Mammary epithelial cell (primary cell): ENCODE measurements at regions of chr19 and their contacts with region 1.

Region 1: GRCh38 chr19:11766597-11767591 is at the start of gene ZNF441:
- DNase-seq: peak; percentile 92
- H3K4me3 ChIP-seq: peak within 1 kb of the TSS; percentile 46 to 59 (median 50)
- H3K27ac ChIP-seq: peak within 1 kb of the TSS; percentile 9
- H3K4me1 ChIP-seq: no peaks in the 10 kb centered on the region
- H3K27me3 ChIP-seq: no peaks in the 10 kb centered on the region
- CTCF ChIP-seq: no peak
- total RNA-seq, gene ZNF441: 3.1 to 6.7 TPM

Region 2: DNA sequence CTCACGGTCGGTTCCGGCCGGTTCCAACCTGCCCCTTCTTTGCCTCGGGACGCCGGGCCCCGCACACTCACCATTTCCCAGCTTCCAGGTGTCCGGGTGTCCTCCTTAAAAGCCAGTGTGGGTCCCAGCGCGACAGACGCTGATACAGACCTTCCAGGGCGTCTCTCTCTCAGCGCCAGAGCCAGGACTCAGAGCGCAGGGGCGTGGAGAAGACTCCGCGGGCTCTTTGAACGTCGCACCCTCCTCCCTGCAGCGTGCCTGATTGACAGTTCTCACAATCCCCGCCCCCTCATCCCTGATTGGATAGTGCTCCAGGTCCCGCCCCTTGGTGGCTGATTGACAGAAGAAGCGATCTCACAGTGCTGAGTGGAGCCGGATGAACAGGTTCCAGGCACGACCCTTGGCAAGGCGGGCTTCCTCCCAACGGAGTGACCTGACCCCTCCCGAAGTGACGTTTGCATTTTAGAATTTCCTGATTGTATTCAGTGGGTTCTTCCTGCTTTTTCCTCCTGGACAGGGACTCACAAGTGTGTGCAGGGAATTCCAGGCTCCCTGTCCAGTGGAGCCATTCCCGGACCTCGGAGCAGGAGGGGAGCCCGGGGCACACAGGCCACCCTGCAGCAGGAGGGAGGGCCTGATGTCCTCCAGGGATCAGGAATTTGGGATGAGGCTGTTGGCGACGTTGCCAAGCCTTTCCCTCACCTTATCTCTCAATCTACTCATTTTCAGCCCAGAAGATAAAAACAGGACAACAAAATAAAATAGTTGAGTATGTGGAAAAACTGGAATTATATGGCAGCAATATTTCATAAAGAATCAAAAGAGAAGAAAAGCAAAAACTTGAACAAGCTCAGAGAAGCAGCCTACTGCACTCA is 27.9 kb before region 1 on chr19 and contains the start of gene ZNF823:
- CTCF ChIA-PET with region 1: no interaction called
- dilution Hi-C with region 1: no loop called
- in situ Hi-C with region 1: no loop called
- intact Hi-C with region 1: loop called (anchors 2 kb)
- DNase-seq: peak; percentile 98
- H3K4me3 ChIP-seq: peak within 1 kb of the TSS; percentile 82 to 92 (median 91)
- H3K27ac ChIP-seq: peak within 1 kb of the TSS; percentile 61
- H3K4me1 ChIP-seq: peaks cover 20% of the 10 kb centered on the region
- H3K27me3 ChIP-seq: no peaks in the 10 kb centered on the region
- CTCF ChIP-seq: no peak
- total RNA-seq, gene ZNF823: 2.8 to 9.5 TPM

Region 3: GRCh38 chr19:12000152-12000981 is 233.5 kb after region 1 on chr19:
- CTCF ChIA-PET with region 1: no interaction called
- dilution Hi-C with region 1: no loop called
- in situ Hi-C with region 1: no loop called
- intact Hi-C with region 1: no loop called
- DNase-seq: peak; percentile 52
- H3K4me3 ChIP-seq: no peak overlapping the region
- H3K27ac ChIP-seq: no peak overlapping the region
- H3K4me1 ChIP-seq: no peaks in the 10 kb centered on the region
- H3K27me3 ChIP-seq: no peaks in the 10 kb centered on the region
- CTCF ChIP-seq: no peak